Posterior vena cava (tissue), 2 donors: ENCODE measurements at regions of chr1 and their contacts with region 1.

Region 1: GRCh38 chr1:151246786-151247185 is 7.7 kb upstream of the PSMD4 start:
- DNase-seq: no peak

Region 2: GRCh38 chr1:151059078-151059907 is 187.5 kb before region 1 on chr1 and contains the start of gene CDC42SE1:
- intact Hi-C with region 1: no loop called
- DNase-seq: peak; percentile 96
- total RNA-seq, gene CDC42SE1: 65.7 to 68.2 TPM

Region 3: GRCh38 chr1:151210830-151211229 is 36.0 kb before region 1 on chr1:
- intact Hi-C with region 1: loop called in 1 of 2 experiments (anchors 5 kb)
- DNase-seq: no peak